H1 (cell line): ENCODE measurements at regions of chr19 and their contacts with region 1.

Region 1: GRCh38 chr19:33905937-33906576 is 109.4 kb downstream of the KCTD15 start:
- DNase-seq: peak in 1 of 2 experiments; percentile 84
- H3K4me3 ChIP-seq: peak overlapping the region; percentile 39 to 64 (median 62)
- H3K27ac ChIP-seq: no peak overlapping the region; the same call in 1 of the 2 replicates
- H3K4me1 ChIP-seq: peaks cover 5 to 10% (median 6%) of the 10 kb centered on the region in 4 experiments; a peak in 6 of 7 replicates
- H3K27me3 ChIP-seq: no peaks in the 10 kb centered on the region; a peak in 2 of 7 replicates
- CTCF ChIP-seq: no peak
- EP300 ChIP-seq: no peak
- POLR2A ChIP-seq: no peak
- RAD21 ChIP-seq: no peak

Region 2: GRCh38 chr19:33795370-33796163 is 110.5 kb before region 1 on chr19:
- CTCF ChIA-PET with region 1: interaction called, 4 read pairs
- POLR2A ChIA-PET with region 1: interaction called, 35 read pairs
- DNase-seq: peak in 1 of 2 experiments; percentile 90
- H3K4me3 ChIP-seq: peak overlapping the region; percentile 40 to 91 (median 58)
- H3K27ac ChIP-seq: peak overlapping the region; percentile 92
- H3K4me1 ChIP-seq: peaks cover 7 to 18% (median 16%) of the 10 kb centered on the region in 4 experiments
- H3K27me3 ChIP-seq: no peaks in the 10 kb centered on the region; a peak in 2 of 7 replicates
- CTCF ChIP-seq: peak; percentile 57 to 93 (median 61)
- EP300 ChIP-seq: peak in 1 of 2 experiments; percentile 96; a peak in 1 of 3 replicates
- POLR2A ChIP-seq: peak; percentile 61 to 76
- RAD21 ChIP-seq: peak; percentile 34 to 69; a peak in 3 of 4 replicates

Region 3: GRCh38 chr19:33819880-33820781 is 85.9 kb before region 1 on chr19:
- CTCF ChIA-PET with region 1: interaction called, 3 read pairs
- POLR2A ChIA-PET with region 1: interaction called, 14 read pairs
- DNase-seq: peak in 1 of 2 experiments; percentile 89
- H3K4me3 ChIP-seq: peak overlapping the region; percentile 57 to 71 (median 62)
- H3K27ac ChIP-seq: no peak overlapping the region
- H3K4me1 ChIP-seq: peaks cover 0 to 12% (median 7%) of the 10 kb centered on the region in 4 experiments; a peak in 6 of 7 replicates
- H3K27me3 ChIP-seq: peaks cover 0 to 7% (median 4%) of the 10 kb centered on the region in 4 experiments; a peak in 5 of 7 replicates
- CTCF ChIP-seq: no peak
- EP300 ChIP-seq: no peak
- POLR2A ChIP-seq: no peak
- RAD21 ChIP-seq: peak; percentile 0 to 3; a peak in 2 of 4 replicates

Region 4: GRCh38 chr19:33938812-33939211 is 32.8 kb after region 1 on chr19:
- CTCF ChIA-PET with region 1: no interaction called
- POLR2A ChIA-PET with region 1: no interaction called
- DNase-seq: no peak
- H3K4me3 ChIP-seq: no peak overlapping the region
- H3K27ac ChIP-seq: no peak overlapping the region
- H3K4me1 ChIP-seq: no peaks in the 10 kb centered on the region
- H3K27me3 ChIP-seq: no peaks in the 10 kb centered on the region
- CTCF ChIP-seq: no peak
- EP300 ChIP-seq: no peak
- POLR2A ChIP-seq: no peak
- RAD21 ChIP-seq: no peak

Region 5: DNA sequence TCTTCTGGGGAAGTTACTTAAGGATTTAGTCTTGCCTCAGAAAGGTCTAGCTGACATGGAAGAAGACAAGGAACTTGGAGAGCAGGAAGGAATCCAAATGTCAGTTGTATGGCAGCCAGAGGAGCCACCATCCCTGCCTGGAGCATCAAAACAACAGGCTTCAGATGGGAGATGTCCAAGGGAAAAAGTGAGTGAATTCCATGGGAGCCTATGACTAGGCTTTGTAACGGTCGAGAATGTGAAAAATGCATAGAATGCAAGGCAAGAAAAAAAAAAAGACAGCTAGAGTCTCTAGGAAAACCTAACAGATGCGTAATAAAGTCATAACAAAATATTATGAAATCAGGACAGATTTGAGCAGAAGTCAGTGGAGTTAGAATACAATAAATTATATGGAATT is 82.5 kb after region 1 on chr19:
- CTCF ChIA-PET with region 1: no interaction called
- POLR2A ChIA-PET with region 1: no interaction called
- DNase-seq: no peak
- H3K4me3 ChIP-seq: no peak overlapping the region
- H3K27ac ChIP-seq: no peak overlapping the region
- H3K4me1 ChIP-seq: no peaks in the 10 kb centered on the region
- H3K27me3 ChIP-seq: no peaks in the 10 kb centered on the region
- CTCF ChIP-seq: no peak
- EP300 ChIP-seq: no peak
- POLR2A ChIP-seq: no peak
- RAD21 ChIP-seq: no peak

Region 6: GRCh38 chr19:34171877-34172660 is 266.0 kb after region 1 on chr19 and contains the start of gene LSM14A:
- CTCF ChIA-PET with region 1: no interaction called
- POLR2A ChIA-PET with region 1: interaction called, 11 read pairs
- DNase-seq: peak; percentile 61 to 94
- H3K4me3 ChIP-seq: peak within 1 kb of the TSS; percentile 73 to 94 (median 90)
- H3K27ac ChIP-seq: peak within 1 kb of the TSS; percentile 99
- H3K4me1 ChIP-seq: peaks cover 0 to 6% (median 4%) of the 10 kb centered on the region in 4 experiments; a peak in 5 of 7 replicates
- H3K27me3 ChIP-seq: no peaks in the 10 kb centered on the region
- CTCF ChIP-seq: no peak
- EP300 ChIP-seq: no peak
- POLR2A ChIP-seq: peak; percentile 93 to 99
- RAD21 ChIP-seq: no peak
- total RNA-seq, gene LSM14A: 190 and 195 TPM in 2 replicates